Natural killer cell (primary cell): ENCODE measurements at regions of chr4 and their contacts with region 1.

Region 1: DNA sequence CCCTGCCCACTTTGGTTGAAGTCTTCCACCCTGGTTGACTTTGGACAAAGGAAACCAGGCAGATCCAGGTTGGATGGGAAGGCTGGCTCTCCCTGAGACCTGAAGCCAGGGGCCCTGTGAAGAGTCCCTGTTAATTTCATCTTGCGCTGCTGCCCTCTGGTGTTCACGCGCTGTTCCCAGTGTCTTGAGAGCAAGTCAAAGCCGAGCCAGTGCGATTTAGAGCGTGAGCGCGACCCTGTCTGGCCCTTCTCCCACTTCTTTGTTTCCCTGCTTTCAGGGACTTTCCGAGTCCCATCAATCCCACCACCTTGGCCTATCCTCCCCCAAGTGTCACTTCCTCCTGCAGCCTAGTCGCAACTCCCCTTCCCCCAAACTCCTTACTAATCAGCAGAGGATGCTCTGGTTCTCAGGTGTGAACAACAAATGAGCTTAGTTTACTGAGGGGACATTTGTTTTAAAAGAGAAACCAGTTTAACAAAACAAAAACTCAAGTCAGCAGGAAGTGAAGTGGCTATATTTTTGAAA is 25.8 kb upstream of the CHRNA9 start:
- DNase-seq: peak; percentile 84 to 96
- ATAC-seq: peak; percentile 72 to 84 (median 73)
- H3K4me3 ChIP-seq: no peak overlapping the region
- H3K4me3 Mint-ChIP-seq: peak overlapping the region; percentile 79
- H3K27ac ChIP-seq: peak overlapping the region; percentile 87
- H3K27ac Mint-ChIP-seq: peak overlapping the region; percentile 88 to 91
- H3K4me1 ChIP-seq: peaks cover 57% of the 10 kb centered on the region
- H3K4me1 Mint-ChIP-seq: peaks cover 54 to 59% of the 10 kb centered on the region in 2 donors
- H3K27me3 ChIP-seq: no peaks in the 10 kb centered on the region
- H3K27me3 Mint-ChIP-seq: no peaks in the 10 kb centered on the region
- CTCF ChIP-seq: peak; percentile 83

Region 2: DNA sequence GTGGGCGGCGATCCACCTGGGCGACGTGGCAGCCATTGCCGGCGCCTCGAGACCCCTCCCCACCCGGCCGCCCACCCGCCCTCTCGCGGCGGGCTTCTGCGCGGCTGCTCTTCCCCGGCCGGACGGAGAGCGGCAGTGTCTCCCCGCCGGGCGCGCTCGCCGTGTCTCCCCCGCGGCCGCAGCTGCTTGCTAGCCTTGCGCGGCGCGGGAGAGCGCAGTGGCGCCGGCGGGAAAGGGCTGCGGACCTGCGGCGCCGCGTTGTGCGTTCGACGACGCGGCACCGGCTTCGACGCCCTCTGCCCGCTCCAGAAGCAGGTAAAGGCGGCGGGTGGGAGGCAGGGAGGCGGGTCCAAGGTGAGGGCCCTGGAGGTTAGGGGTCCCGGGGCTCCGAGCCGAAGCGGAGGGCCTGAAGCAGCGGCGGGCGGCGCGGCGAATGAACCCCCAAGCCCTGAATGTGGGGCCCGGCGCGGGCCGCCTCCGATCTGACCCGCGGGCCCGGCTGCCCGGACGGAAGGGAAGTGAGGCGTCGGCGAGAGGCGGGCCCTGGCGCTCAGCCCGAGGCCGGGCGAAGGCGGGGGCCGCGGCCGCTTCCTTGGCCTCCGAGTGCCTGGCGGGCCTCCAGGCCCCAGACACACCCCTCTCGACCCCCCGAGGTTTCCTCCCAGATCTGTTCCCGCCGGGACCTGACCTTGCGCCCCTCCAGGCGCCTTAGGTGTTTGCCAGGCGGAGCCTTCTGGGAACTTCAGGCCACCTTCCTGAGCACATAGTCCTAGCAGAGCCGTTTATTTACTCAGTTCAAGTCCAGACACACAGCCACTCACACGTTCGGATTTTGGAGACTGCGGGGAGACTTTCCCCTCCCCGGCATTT is 252.4 kb before region 1 on chr4 and contains the start of gene N4BP2:
- intact Hi-C with region 1: loop called (anchors 2 kb)
- DNase-seq: peak; percentile 63 to 89
- ATAC-seq: peak; percentile 65 to 81 (median 76)
- H3K4me3 ChIP-seq: peak within 1 kb of the TSS; percentile 65
- H3K4me3 Mint-ChIP-seq: peak within 1 kb of the TSS; percentile 95
- H3K27ac ChIP-seq: peak within 1 kb of the TSS; percentile 91
- H3K27ac Mint-ChIP-seq: peak within 1 kb of the TSS; percentile 91 to 95
- H3K4me1 ChIP-seq: peaks cover 18% of the 10 kb centered on the region
- H3K4me1 Mint-ChIP-seq: peaks cover 26 to 39% of the 10 kb centered on the region in 2 donors
- H3K27me3 ChIP-seq: no peaks in the 10 kb centered on the region
- H3K27me3 Mint-ChIP-seq: no peaks in the 10 kb centered on the region
- CTCF ChIP-seq: peak; percentile 74
- total RNA-seq, gene N4BP2: 16.4 to 22.4 (median 17.5) TPM

Region 3: DNA sequence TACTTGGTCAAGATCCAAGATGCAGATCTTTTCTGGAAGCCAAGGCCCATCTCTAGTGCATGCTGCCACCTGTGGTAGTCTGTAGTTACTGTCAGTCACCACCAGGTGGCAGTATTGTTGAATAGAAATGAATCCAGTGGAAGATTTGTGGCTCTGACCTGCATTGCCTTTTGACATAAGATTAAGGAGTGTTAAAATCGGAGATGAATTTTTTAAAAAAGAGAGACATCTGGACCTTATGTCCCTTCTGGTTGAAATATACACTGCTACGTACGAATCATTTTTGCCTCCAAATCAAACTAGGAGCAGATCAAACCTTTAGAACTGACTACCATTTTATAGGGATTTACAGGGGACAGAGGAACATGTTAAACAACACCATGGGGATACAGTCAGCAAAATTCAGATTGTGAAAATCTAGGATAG is 159.3 kb before region 1 on chr4:
- intact Hi-C with region 1: loop called (anchors 1 kb)
- DNase-seq: peak; percentile 51 to 90
- ATAC-seq: peak; percentile 86 to 98 (median 92)
- H3K4me3 ChIP-seq: no peak overlapping the region
- H3K4me3 Mint-ChIP-seq: no peak overlapping the region
- H3K27ac ChIP-seq: no peak overlapping the region
- H3K27ac Mint-ChIP-seq: no peak overlapping the region
- H3K4me1 ChIP-seq: peaks cover 3% of the 10 kb centered on the region
- H3K4me1 Mint-ChIP-seq: peaks cover 0 to 7% of the 10 kb centered on the region in 2 donors
- H3K27me3 ChIP-seq: no peaks in the 10 kb centered on the region
- H3K27me3 Mint-ChIP-seq: no peaks in the 10 kb centered on the region
- CTCF ChIP-seq: peak; percentile 92

Region 4: DNA sequence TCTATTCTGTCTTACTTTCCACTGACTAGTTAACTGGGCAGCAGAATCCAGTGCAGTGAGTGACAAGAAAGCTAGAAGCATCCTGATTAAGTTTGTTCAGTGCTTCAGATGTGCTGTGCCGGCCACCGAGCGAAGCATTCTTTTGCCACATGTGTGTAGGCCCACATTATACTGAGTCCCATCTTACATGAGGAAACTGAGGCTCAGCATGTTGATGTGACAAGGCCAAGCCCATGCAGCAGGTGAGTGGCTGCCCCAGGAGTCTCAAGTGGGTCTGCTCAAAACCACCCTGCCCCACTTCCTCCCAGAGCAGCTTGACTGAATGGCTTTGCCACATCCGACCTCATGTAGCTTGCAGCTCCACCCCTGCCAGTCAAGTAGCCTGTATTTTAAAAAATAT is 62.0 kb before region 1 on chr4:
- intact Hi-C with region 1: loop called (anchors 10 kb)
- DNase-seq: peak; percentile 38 to 84
- ATAC-seq: peak; percentile 77 to 87 (median 87)
- H3K4me3 ChIP-seq: no peak overlapping the region
- H3K4me3 Mint-ChIP-seq: peak overlapping the region; percentile 53
- H3K27ac ChIP-seq: peak overlapping the region; percentile 48
- H3K27ac Mint-ChIP-seq: peak overlapping the region; percentile 79 to 81
- H3K4me1 ChIP-seq: peaks cover 65% of the 10 kb centered on the region
- H3K4me1 Mint-ChIP-seq: peaks cover 45 to 70% of the 10 kb centered on the region in 2 donors
- H3K27me3 ChIP-seq: no peaks in the 10 kb centered on the region
- H3K27me3 Mint-ChIP-seq: no peaks in the 10 kb centered on the region
- CTCF ChIP-seq: no peak

Region 5: GRCh38 chr4:40264995-40265909 is 44.1 kb before region 1 on chr4:
- intact Hi-C with region 1: loop called (anchors 2 kb)
- DNase-seq: peak; percentile 68 to 83
- ATAC-seq: peak; percentile 86 to 96 (median 90)
- H3K4me3 ChIP-seq: no peak overlapping the region
- H3K4me3 Mint-ChIP-seq: peak overlapping the region; percentile 77
- H3K27ac ChIP-seq: peak overlapping the region; percentile 61
- H3K27ac Mint-ChIP-seq: peak overlapping the region; percentile 83 to 84
- H3K4me1 ChIP-seq: peaks cover 41% of the 10 kb centered on the region
- H3K4me1 Mint-ChIP-seq: peaks cover 42 to 49% of the 10 kb centered on the region in 2 donors
- H3K27me3 ChIP-seq: no peaks in the 10 kb centered on the region
- H3K27me3 Mint-ChIP-seq: peaks cover 0 to 2% of the 10 kb centered on the region in 2 donors
- CTCF ChIP-seq: no peak